ENCODE measurements at regions of chr19 and their contacts with region 1.

Region 1: DNA sequence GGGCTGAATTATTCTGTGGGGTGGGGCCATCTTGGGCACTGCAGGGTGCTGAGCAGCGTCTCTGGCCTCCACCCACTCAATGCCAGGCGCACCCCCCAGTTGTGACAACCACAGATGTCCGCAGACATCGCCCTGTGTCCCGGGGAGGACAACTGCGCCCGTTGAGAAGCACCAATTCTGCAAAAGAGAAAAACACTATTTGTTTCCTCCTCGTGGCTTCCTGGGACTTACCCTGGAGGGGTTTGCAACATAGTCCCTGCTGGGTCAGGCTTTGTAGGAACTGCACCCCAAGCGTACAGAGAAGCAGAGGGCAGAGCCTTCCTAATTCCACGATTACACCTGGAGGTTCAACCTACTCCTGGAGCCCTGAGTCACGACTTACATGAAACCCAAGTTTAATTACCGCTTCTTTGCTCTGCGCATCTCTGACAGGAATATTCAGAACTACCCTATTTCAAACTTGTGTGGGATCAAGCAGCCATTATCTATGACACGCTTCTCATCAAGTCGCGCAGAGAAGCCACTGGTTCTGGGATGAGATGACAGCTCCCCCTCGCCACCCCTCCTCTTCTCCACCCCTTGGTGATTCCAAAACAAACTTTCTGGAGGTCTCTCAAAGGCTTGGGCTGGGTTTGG is 11.1 kb upstream of the SLC39A3 start:
- DNase-seq: no peak
- ATAC-seq: no peak

Region 2: DNA sequence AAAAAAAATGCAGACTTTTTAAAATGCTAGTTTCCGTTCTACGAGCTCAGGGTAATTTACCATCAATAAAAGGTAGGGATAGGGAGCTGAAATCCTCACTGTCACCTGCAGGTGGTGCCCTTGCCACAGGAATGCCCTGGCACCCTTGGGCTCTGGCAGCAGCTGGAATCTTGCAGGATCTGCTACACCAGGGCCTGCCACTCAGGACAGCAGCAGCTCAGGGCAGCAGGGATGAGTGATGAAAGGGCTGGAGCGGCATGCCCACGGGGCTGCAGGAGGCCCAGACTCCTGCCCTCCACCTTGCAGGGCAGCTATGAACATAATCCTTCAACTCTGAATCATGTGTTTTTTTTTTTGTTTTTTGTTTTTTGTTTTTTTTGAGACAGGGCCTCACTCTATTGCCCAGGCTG is 102.4 kb before region 1 on chr19:
- intact Hi-C with region 1: loop called (anchors 1 kb)
- DNase-seq: peak; percentile 82
- ATAC-seq: peak; percentile 78

Region 3: GRCh38 chr19:2869618-2870017 is 118.7 kb after region 1 on chr19:
- intact Hi-C with region 1: loop called (anchors 5 kb)
- DNase-seq: no peak
- ATAC-seq: no peak

Measured in Right ventricle myocardium inferior (tissue), 1 donor.